CD14-positive monocyte (primary cell): ENCODE measurements at regions of chr9 and their contacts with region 1.

Region 1: DNA sequence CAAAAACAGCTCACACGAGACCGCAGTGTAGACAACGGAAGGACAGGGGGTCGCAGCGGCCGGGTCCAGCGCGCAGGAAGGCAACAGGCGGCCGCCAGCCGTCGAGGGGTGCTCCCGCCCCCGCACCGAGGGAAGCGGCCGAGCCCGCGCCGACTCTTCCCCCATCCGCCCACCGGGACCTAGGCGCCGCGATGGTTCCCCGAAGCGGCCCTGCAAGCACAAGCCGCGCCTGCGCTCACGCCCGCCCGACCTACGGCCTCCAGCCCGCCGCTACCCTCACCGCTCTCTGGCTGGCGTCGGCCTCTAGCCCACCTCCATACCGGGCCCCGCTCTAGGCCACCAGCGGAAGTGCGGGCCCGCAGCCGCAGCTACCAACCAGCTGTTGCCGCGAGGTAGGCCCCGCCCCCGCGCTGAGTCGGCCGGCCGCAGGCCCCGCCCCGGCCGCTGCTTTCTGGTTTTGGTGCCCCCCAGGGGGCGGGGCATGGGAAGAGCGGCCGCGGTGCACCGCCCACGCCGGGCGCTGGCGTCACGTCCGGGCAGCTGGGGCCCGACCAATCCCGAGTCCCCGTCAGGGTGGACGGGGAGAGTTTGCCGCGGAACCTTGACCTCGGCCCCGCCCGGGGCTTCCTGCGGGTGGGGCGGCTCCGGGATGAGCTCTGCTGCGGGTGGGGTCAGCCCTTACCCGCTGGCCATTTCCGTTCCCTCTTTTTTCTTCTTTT is at the start of gene SETX:
- DNase-seq: peak; percentile 97 to 98 (median 97)
- H3K4me3 ChIP-seq: peak within 1 kb of the TSS; percentile 54 to 98 (median 94)
- H3K4me3 Mint-ChIP-seq: peak within 1 kb of the TSS; percentile 95
- H3K27ac ChIP-seq: peak within 1 kb of the TSS; percentile 77 to 96
- H3K27ac Mint-ChIP-seq: peak within 1 kb of the TSS; percentile 93 to 99 (median 97)
- H3K4me1 ChIP-seq: peaks cover 53 to 59% of the 10 kb centered on the region in 2 donors
- H3K4me1 Mint-ChIP-seq: peaks cover 56% of the 10 kb centered on the region
- H3K27me3 ChIP-seq: no peaks in the 10 kb centered on the region
- H3K27me3 Mint-ChIP-seq: no peaks in the 10 kb centered on the region
- CTCF ChIP-seq: no peak
- polyA plus RNA-seq, gene SETX: 18.4 to 31.7 (median 24.2) TPM

Region 2: GRCh38 chr9:132387133-132387532 is 32.3 kb after region 1 on chr9:
- intact Hi-C with region 1: loop called in 1 of 2 experiments (anchors 5 kb)
- DNase-seq: no peak
- H3K4me3 ChIP-seq: no peak overlapping the region
- H3K4me3 Mint-ChIP-seq: no peak overlapping the region
- H3K27ac ChIP-seq: no peak overlapping the region
- H3K27ac Mint-ChIP-seq: peak overlapping the region in 2 of 7 donors; percentile 37 to 54
- H3K4me1 ChIP-seq: peaks cover 16 to 17% of the 10 kb centered on the region in 2 donors
- H3K4me1 Mint-ChIP-seq: peaks cover 18% of the 10 kb centered on the region
- H3K27me3 ChIP-seq: no peaks in the 10 kb centered on the region
- H3K27me3 Mint-ChIP-seq: peaks cover 0 to 3% (median 0%) of the 10 kb centered on the region in 3 donors
- CTCF ChIP-seq: no peak

Region 3: GRCh38 chr9:132406554-132407122 is 51.8 kb after region 1 on chr9 and contains the start of gene TTF1:
- intact Hi-C with region 1: loop called (anchors 2 kb)
- DNase-seq: peak; percentile 91 to 95 (median 93)
- H3K4me3 ChIP-seq: peak within 1 kb of the TSS; percentile 48 to 93 (median 87)
- H3K4me3 Mint-ChIP-seq: peak within 1 kb of the TSS; percentile 92 to 94
- H3K27ac ChIP-seq: peak within 1 kb of the TSS; percentile 3 to 68
- H3K27ac Mint-ChIP-seq: peak within 1 kb of the TSS; percentile 79 to 92 (median 86)
- H3K4me1 ChIP-seq: peaks cover 39 to 41% of the 10 kb centered on the region in 2 donors
- H3K4me1 Mint-ChIP-seq: peaks cover 43% of the 10 kb centered on the region
- H3K27me3 ChIP-seq: peaks cover 22 to 32% of the 10 kb centered on the region in 2 donors
- H3K27me3 Mint-ChIP-seq: peaks cover 24 to 32% (median 31%) of the 10 kb centered on the region in 3 donors
- CTCF ChIP-seq: no peak
- polyA plus RNA-seq, gene TTF1: 2.2 to 5.8 (median 4.1) TPM